PC-3 (cell line): ENCODE measurements at regions of chr1 and their contacts with region 1.

Region 1: GRCh38 chr1:44213222-44214112 is at the start of gene DMAP1:
- DNase-seq: peak; percentile 81
- ATAC-seq: peak; percentile 83
- H3K4me3 ChIP-seq: peak within 1 kb of the TSS; percentile 94
- H3K27ac ChIP-seq: no peak within 1 kb of the TSS
- H3K4me1 ChIP-seq: peaks cover 6% of the 10 kb centered on the region
- H3K27me3 ChIP-seq: no peaks in the 10 kb centered on the region
- CTCF ChIP-seq: no peak
- total RNA-seq, gene DMAP1: 55.5 and 59.0 TPM in 2 replicates

Region 2: DNA sequence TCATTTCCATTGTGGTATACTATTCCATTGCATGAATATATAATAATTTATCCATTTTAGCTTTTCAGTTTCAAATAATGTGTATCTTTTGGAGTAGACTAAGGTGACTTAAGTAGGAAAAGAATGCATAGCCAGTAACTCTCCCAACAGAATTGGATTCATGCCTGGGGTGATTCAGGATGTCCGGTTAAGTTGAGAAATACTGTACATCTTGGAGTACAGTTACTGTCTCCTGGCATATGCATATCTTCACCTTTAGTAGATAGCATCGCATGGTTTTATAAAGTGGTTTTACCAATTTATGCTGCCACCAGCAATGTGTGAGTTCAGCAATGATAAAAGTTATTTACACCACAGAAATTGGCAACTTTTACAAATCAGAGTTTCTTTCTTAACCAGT is 163.6 kb before region 1 on chr1:
- CTCF ChIA-PET with region 1: interaction called, 4 read pairs
- POLR2A ChIA-PET with region 1: no interaction called
- intact Hi-C with region 1: loop called (anchors 5 kb)
- DNase-seq: peak; percentile 96
- ATAC-seq: peak; percentile 60
- H3K4me3 ChIP-seq: peak overlapping the region; percentile 51; the same call in 1 of the 2 replicates
- H3K27ac ChIP-seq: peak overlapping the region; percentile 98
- H3K4me1 ChIP-seq: peaks cover 39% of the 10 kb centered on the region
- H3K27me3 ChIP-seq: no peaks in the 10 kb centered on the region
- CTCF ChIP-seq: no peak

Region 3: GRCh38 chr1:44131411-44131810 is 82.1 kb before region 1 on chr1:
- CTCF ChIA-PET with region 1: no interaction called
- POLR2A ChIA-PET with region 1: interaction called, 17 read pairs
- intact Hi-C with region 1: no loop called
- DNase-seq: no peak
- ATAC-seq: no peak
- H3K4me3 ChIP-seq: no peak overlapping the region
- H3K27ac ChIP-seq: no peak overlapping the region
- H3K4me1 ChIP-seq: no peaks in the 10 kb centered on the region
- H3K27me3 ChIP-seq: no peaks in the 10 kb centered on the region
- CTCF ChIP-seq: no peak

Region 4: DNA sequence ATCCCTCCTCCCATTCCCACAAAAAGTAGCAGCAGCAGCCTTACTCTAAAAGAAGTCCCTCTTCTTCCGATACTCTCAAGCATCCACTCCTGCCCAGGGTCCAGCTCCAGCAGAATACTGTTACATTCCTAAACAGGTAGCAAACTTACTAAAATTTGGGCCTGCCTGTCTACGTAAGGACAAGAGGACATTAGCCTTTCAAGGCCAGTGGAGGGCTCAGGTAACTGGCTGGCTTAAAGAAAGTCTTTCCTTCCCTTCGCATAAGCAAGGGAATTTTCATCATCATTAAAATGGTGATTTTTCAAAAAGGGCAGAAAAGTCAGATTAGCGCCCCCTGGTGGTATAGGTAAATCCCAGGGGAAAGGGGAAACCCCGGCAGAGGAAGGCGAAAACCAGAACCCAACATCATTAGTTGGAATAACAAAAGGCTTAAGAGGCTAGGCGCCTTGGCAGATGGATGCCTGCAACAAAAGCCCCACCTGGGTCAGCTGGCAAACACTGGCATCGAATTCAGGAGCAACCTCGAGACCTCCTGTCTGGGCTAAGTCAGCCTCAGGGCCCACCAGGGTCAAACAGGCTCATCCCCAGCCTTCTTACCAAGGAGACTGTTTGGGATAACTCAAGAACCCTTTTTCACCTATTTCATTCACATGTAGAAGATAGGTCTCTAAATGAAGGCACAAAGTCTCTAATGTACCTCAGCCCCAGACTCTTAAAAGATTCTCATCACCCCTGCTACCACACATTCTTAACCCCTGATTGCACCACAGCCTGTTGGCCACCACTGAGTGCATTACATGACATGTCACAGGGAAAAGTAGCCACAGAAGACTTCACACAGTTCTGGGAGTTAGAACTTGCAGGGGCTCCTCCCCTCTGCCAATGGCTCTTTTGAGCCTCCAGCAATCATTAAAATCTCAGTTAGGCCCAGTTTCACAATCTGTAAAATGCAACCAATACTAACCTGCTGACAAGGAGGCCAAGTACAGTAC is 104.9 kb after region 1 on chr1:
- CTCF ChIA-PET with region 1: no interaction called
- POLR2A ChIA-PET with region 1: no interaction called
- intact Hi-C with region 1: loop called (anchors 2 kb)
- DNase-seq: peak; percentile 61
- ATAC-seq: peak; percentile 43
- H3K4me3 ChIP-seq: no peak overlapping the region
- H3K27ac ChIP-seq: no peak overlapping the region
- H3K4me1 ChIP-seq: no peaks in the 10 kb centered on the region
- H3K27me3 ChIP-seq: no peaks in the 10 kb centered on the region
- CTCF ChIP-seq: peak; percentile 94

Region 5: DNA sequence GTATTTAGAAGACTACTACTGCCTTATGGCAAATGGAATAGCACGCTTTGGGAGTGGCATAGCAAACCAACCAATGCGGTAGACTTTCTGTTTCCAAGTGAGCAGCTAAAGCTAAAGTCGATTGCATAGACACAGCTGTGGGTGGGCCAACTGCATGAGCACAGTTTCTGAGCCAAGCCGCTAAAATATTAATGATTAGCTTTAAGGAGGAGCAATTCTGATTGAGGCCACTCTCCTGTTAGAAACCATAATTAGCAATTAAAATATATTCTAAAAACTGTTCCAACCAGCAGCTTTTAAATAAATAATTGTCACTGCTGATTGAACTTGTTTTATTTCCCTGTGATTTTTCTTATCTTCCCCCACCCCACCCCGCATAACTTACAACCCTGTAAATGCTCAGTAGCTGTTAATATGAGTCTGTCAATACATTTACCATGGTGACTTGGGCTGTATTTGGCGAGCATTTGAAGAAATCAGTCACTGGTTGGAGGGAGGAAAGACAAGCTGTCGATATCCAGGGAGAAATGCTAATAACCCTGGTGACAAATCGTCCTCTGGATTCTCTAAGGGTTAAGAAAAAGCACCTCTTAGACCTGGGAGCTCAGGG is 223.7 kb after region 1 on chr1:
- CTCF ChIA-PET with region 1: no interaction called
- POLR2A ChIA-PET with region 1: no interaction called
- intact Hi-C with region 1: no loop called
- DNase-seq: no peak
- ATAC-seq: no peak
- H3K4me3 ChIP-seq: no peak overlapping the region
- H3K27ac ChIP-seq: no peak overlapping the region
- H3K4me1 ChIP-seq: no peaks in the 10 kb centered on the region
- H3K27me3 ChIP-seq: no peaks in the 10 kb centered on the region
- CTCF ChIP-seq: no peak

Region 6: DNA sequence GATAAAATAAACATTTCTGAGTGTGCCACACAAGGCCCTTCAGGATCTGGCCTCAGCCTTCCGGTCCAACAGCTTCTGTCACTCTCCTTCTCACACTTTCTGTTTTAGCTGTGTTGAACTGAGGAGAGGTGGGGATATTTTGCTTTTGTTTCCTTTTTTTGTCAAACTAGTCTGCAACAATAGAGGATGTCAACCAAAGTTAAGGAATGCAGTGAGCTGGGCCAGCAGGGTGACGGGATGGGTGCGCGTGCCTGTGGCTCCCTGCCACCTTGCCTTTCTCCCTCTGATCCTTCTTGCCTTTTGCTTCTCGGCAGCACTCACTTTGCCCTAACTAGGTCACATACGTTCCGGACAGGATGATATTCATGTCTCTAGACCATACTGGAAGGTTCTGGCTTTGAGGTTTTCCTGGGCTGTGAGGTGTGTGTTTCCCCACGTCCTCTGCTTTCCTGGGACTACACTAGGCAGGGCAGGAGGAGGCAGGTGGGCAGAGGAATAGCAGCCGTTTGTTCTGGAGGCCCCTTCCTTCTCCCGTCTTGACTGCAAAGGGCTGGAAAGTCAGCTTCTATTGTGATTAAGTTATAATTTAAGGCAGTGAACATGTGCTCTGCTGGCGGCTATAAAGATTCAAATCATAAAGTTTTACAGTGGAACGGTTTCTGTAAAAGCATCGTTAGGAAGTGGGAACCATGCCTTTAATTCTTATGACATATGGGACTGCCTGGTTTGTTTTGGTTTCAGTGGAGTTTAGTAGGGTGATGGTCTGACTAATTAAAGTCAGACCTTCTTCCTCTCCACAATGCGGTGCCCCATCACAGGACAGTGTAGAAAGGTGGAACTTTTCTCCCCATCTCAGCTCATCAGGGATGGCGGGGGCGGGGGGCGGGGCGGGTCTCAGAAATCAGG is 259.4 kb after region 1 on chr1:
- CTCF ChIA-PET with region 1: no interaction called
- POLR2A ChIA-PET with region 1: no interaction called
- intact Hi-C with region 1: no loop called
- DNase-seq: no peak
- ATAC-seq: peak; percentile 31; the same call in 1 of the 2 replicates
- H3K4me3 ChIP-seq: no peak overlapping the region
- H3K27ac ChIP-seq: no peak overlapping the region
- H3K4me1 ChIP-seq: no peaks in the 10 kb centered on the region
- H3K27me3 ChIP-seq: no peaks in the 10 kb centered on the region
- CTCF ChIP-seq: no peak

Region 7: DNA sequence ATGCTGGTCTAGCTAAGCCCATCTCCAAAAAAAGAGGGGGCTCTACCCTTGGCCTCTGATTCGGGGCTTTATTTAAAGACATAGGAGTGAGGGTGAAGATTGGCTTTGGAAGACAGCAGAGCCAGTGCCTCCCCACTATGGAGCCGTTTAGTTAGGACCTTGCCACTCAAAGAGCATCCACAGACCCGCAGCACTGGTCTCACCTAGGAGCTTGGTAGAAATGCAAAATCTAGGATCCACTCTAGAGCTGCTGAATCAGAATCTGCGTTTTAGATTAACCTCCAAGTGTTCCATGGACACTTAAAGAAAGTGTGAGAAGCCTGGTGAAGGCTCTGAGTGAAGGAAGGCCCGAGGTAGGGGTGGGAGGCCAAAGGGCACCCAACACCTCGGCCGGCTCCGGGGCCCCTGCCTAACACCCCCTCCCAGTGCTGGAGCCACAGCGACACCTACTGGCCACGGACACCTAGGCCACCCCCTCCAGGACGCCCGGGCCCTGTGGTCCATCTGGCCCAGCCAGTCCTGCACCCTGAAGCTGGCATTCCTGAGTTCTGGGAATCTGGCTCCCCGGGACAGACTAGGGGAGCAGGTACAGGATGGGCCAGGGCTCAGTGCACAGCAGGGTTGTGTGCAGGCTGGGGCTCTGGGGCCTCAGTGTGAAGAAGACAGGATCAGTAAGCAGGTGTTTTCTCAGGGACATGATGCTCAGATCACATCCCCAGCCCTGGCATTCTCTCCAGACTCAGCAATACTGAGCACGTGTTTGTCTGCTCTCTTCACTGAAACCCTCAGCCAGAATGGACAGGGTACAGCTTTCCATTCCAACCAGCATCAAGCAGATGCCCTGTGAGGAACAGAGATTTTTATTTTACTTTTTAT is 381.6 kb after region 1 on chr1:
- CTCF ChIA-PET with region 1: no interaction called
- POLR2A ChIA-PET with region 1: no interaction called
- intact Hi-C with region 1: loop called (anchors 5 kb)
- DNase-seq: peak; percentile 74
- ATAC-seq: peak; percentile 97
- H3K4me3 ChIP-seq: no peak overlapping the region
- H3K27ac ChIP-seq: no peak overlapping the region
- H3K4me1 ChIP-seq: no peaks in the 10 kb centered on the region
- H3K27me3 ChIP-seq: no peaks in the 10 kb centered on the region
- CTCF ChIP-seq: peak; percentile 98